ENCODE measurements at regions of chrX and their contacts with region 1.

Region 1: GRCh38 chrX:21708116-21708515 is 49.8 kb downstream of the SMPX start:
- ATAC-seq: no peak
- H3K4me3 ChIP-seq: no peak overlapping the region
- H3K27ac ChIP-seq: no peak overlapping the region
- H3K4me1 ChIP-seq: peaks cover 4 to 11% of the 10 kb centered on the region in 2 donors

Region 2: DNA sequence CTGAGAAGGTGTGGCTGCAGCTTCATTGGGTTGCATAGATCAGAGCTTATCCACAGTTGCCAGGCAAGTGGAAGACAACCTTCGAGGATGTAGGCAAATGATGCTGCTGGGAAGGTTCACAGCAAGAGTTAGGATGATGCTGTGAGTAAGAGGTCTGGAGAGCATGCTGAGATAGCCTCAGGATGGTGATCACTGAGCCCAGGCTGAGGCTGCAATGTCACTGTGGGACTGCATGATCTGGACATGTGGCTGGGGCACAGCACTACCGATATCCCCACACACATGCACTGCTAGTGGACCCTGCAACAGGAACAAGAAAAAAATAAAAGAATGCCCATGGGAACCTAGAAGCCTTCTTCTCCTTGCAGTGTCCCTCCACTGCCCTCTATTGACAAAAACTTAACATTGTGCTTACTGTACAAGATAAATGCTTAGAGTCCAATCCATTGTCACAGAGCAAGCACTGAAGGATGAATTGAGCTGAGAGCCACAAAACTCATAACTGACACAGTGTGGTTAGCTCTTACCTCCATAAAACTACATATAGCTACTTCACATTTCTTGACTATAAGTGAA is 228.3 kb before region 1 on chrX:
- in situ Hi-C with region 1: loop called in 2 of 9 experiments (anchors 25 kb)
- ATAC-seq: peak; percentile 42 to 82 (median 68)
- H3K4me3 ChIP-seq: no peak overlapping the region
- H3K27ac ChIP-seq: no peak overlapping the region
- H3K4me1 ChIP-seq: no peaks in the 10 kb centered on the region